Activated CD8-positive, alpha-beta T cell treated with anti-CD3 and anti-CD28 coated beads for 36 hours (primary cell): ENCODE measurements at regions of chr2 and their contacts with region 1.

Region 1: GRCh38 chr2:203225423-203226039 is 13.3 kb upstream of the CYP20A1 start:
- DNase-seq: peak; percentile 45
- ATAC-seq: peak; percentile 94
- H3K4me3 Mint-ChIP-seq: no peak overlapping the region
- H3K27ac Mint-ChIP-seq: no peak overlapping the region
- H3K4me1 Mint-ChIP-seq: no peaks in the 10 kb centered on the region
- H3K27me3 Mint-ChIP-seq: no peaks in the 10 kb centered on the region
- CTCF ChIP-seq: peak; percentile 80

Region 2: GRCh38 chr2:202765436-202765835 is 460.1 kb before region 1 on chr2:
- CTCF ChIA-PET with region 1: no interaction called
- POLR2A ChIA-PET with region 1: no interaction called
- intact Hi-C with region 1: no loop called
- DNase-seq: no peak
- ATAC-seq: no peak
- H3K4me3 Mint-ChIP-seq: no peak overlapping the region
- H3K27ac Mint-ChIP-seq: peak overlapping the region; percentile 38
- H3K4me1 Mint-ChIP-seq: peaks cover 49% of the 10 kb centered on the region
- H3K27me3 Mint-ChIP-seq: no peaks in the 10 kb centered on the region
- CTCF ChIP-seq: no peak

Region 3: GRCh38 chr2:203155406-203155805 is 70.1 kb before region 1 on chr2:
- CTCF ChIA-PET with region 1: no interaction called
- POLR2A ChIA-PET with region 1: no interaction called
- intact Hi-C with region 1: no loop called
- DNase-seq: peak; percentile 23
- ATAC-seq: no peak
- H3K4me3 Mint-ChIP-seq: no peak overlapping the region
- H3K27ac Mint-ChIP-seq: no peak overlapping the region
- H3K4me1 Mint-ChIP-seq: peaks cover 3% of the 10 kb centered on the region
- H3K27me3 Mint-ChIP-seq: no peaks in the 10 kb centered on the region
- CTCF ChIP-seq: peak; percentile 16

Region 4: DNA sequence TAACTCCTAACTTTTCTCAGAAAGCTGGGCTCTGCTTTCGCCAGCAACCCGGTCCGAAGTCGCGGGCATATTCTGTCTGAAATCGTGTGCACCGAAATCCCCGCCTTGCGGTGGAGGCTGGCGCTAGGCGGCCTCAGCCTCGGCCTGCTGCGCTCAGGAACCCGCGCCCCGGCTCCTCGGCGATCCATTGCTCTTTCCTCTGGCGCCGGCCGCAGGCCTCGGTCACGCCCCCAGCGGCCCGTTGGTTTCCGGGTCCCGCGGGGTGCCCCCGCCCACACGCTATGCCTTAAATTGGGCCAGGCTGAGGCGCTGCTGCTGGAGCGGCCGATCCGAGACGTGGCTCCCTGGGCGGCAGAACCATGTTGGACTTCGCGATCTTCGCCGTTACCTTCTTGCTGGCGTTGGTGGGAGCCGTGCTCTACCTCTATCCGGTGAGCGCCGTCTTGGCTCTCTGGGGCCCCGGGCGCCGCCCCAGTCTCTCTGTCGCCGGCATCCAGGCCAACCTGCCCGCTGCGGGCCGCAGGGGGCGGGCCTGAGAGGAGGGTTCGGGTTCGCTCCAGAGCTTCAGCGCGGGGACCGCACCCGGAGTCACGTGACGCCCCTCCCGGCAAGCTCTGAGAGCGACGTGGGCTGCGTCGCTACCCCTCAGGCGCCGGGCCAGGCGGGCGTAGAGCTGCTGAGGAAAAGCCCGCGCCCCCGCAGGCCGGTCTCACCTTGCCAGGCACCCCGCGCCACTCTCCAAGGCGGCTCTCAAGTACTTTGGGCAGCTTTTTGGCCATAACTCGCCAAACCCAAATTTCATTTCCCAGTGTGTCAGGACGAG is 13.4 kb after region 1 on chr2 and contains the start of gene CYP20A1:
- CTCF ChIA-PET with region 1: interaction called, 23 read pairs
- POLR2A ChIA-PET with region 1: interaction called, 6 read pairs
- intact Hi-C with region 1: no loop called
- DNase-seq: peak; percentile 98
- ATAC-seq: peak; percentile 83
- H3K4me3 Mint-ChIP-seq: peak within 1 kb of the TSS; percentile 83
- H3K27ac Mint-ChIP-seq: peak within 1 kb of the TSS; percentile 98
- H3K4me1 Mint-ChIP-seq: peaks cover 30% of the 10 kb centered on the region
- H3K27me3 Mint-ChIP-seq: no peaks in the 10 kb centered on the region
- CTCF ChIP-seq: peak; percentile 17
- total RNA-seq, gene CYP20A1: 13.8 to 14.3 TPM

Region 5: DNA sequence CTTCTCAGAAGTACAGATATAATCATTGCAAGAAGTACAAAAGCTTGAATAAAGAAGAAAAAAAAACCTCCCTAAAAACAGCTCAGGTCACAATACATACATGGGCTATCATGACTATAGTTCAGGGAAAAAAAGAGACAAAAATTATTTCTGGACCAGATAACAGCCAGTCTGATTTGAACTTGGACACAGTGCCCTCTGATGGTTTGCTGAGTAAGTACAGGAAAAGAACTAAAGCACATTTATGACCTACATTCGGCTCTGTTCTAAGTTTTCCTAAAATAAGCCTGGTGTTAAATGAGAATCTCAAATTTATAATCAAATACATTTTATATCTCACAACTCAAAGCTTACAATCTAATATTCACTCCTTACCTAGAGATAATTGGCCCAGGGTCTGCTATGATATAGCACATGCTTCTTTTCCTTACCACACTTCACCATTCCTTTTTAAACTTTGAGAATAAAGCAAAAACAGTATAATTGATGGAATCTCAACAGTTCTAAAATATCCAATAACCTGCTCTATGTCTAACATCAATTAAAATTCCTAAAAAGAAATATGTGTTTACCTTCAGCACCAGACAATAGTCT is 228.4 kb after region 1 on chr2:
- CTCF ChIA-PET with region 1: interaction called, 11 read pairs
- POLR2A ChIA-PET with region 1: no interaction called
- intact Hi-C with region 1: loop called (anchors 5 kb)
- DNase-seq: peak; percentile 38
- ATAC-seq: peak; percentile 76
- H3K4me3 Mint-ChIP-seq: no peak overlapping the region
- H3K27ac Mint-ChIP-seq: no peak overlapping the region
- H3K4me1 Mint-ChIP-seq: no peaks in the 10 kb centered on the region
- H3K27me3 Mint-ChIP-seq: no peaks in the 10 kb centered on the region
- CTCF ChIP-seq: peak; percentile 89

Region 6: GRCh38 chr2:203484266-203485112 is 259.0 kb after region 1 on chr2:
- CTCF ChIA-PET with region 1: no interaction called
- POLR2A ChIA-PET with region 1: no interaction called
- intact Hi-C with region 1: no loop called
- DNase-seq: peak; percentile 67
- ATAC-seq: peak; percentile 96
- H3K4me3 Mint-ChIP-seq: no peak overlapping the region
- H3K27ac Mint-ChIP-seq: peak overlapping the region; percentile 13
- H3K4me1 Mint-ChIP-seq: peaks cover 7% of the 10 kb centered on the region
- H3K27me3 Mint-ChIP-seq: no peaks in the 10 kb centered on the region
- CTCF ChIP-seq: peak; percentile 79

Region 7: DNA sequence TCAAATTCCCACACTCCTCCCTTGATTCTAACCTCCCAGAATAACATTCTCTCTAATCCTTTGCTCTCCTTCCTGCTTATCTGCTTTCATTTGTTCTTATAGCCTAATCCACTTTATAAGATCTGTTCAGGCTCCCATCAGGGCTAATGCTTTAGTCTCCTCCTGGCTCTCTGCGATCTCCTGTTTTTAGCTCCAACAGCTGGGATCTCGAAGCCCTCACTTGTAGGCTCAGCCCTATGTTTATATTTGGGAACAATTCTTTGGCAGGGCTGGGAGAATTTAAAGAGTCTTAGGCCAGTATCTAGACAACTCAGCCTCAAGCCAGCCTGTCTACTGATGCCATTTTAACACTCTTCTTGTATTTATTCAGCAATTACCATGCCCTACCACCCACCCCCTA is 336.7 kb after region 1 on chr2:
- CTCF ChIA-PET with region 1: no interaction called
- POLR2A ChIA-PET with region 1: no interaction called
- intact Hi-C with region 1: no loop called
- DNase-seq: no peak
- ATAC-seq: no peak
- H3K4me3 Mint-ChIP-seq: no peak overlapping the region
- H3K27ac Mint-ChIP-seq: no peak overlapping the region
- H3K4me1 Mint-ChIP-seq: peaks cover 2% of the 10 kb centered on the region
- H3K27me3 Mint-ChIP-seq: no peaks in the 10 kb centered on the region
- CTCF ChIP-seq: no peak